Left ventricle myocardium inferior (tissue), 1 donor: ENCODE measurements at regions of chr1 and their contacts with region 1.

Region 1: DNA sequence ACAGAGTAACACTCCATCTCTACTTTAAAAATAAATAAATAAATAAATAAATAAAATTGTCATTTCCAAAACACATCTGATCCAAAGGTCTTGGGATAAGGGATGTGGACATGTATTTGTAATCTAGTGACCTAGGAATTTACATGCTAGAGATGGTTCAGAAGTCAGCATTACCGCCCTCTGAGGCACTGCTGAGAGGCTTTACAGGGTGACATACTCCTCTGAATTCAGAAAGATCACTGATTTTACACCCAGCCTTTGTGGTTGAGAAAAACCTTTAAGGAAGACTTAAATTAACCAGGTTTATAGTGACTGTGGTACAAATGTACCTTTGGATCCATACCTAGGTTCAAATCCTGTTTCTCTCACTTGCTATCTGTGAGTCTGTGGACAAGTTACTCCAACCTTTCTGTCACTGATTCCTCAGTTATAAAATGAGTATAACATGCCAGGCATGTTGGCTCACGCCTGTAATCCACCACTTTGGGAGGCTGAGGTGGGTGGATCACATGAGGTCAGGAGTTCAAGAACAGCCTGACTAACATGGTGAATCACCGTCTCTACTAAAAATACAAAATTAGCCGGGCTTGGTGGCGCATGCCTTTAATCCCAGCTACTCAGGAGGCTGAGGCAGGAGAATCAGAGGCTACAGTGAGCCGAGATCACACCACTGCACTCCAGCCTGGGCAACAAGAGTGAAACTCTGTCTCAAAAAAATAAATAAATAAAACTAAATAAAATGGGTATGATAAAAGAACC is 20.1 kb downstream of the OSBPL9 start:
- DNase-seq: no peak
- H3K4me3 ChIP-seq: no peak overlapping the region
- H3K27ac ChIP-seq: peak overlapping the region; percentile 41
- H3K4me1 ChIP-seq: peaks cover 56% of the 10 kb centered on the region
- H3K27me3 ChIP-seq: no peaks in the 10 kb centered on the region
- CTCF ChIP-seq: no peak

Region 2: GRCh38 chr1:51410568-51411460 is 226.1 kb before region 1 on chr1:
- intact Hi-C with region 1: no loop called
- DNase-seq: no peak
- H3K4me3 ChIP-seq: no peak overlapping the region
- H3K27ac ChIP-seq: peak overlapping the region; percentile 59
- H3K4me1 ChIP-seq: peaks cover 26% of the 10 kb centered on the region
- H3K27me3 ChIP-seq: no peaks in the 10 kb centered on the region
- CTCF ChIP-seq: no peak

Region 3: DNA sequence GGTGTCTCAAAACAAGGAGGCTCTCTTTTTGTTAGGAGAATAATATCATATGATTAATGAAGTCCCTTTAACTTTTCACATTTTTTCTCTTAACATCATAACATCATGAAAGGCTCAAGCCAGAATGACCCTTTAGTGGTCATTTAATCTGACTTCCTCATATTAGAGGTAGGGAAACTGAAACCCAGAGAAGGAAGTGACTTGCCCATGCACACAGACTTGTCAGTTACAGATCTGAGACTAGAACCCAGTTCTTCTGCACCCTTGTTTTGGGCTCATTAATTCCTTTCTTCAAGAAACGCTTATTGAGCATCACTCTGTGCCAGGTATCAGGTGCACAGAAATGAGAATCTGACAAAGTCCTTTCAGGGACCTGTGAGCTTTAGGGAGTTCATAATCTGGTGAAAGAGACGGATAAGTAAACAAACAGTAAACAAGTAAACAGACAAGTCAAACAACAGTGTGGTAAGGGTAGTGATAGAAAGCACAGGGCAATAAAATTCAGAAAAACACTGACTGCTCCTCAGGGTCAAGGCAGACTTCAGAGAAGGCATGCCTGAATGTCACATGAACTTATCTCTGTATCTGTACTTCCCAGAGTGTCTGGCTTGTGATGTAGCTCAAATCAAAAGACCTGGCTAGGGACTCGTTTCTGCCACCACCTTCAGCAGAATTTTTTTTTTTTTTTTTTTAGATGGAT is 58.4 kb before region 1 on chr1:
- intact Hi-C with region 1: no loop called
- DNase-seq: no peak
- H3K4me3 ChIP-seq: no peak overlapping the region
- H3K27ac ChIP-seq: no peak overlapping the region
- H3K4me1 ChIP-seq: peaks cover 15% of the 10 kb centered on the region
- H3K27me3 ChIP-seq: no peaks in the 10 kb centered on the region
- CTCF ChIP-seq: no peak

Region 4: GRCh38 chr1:51768971-51769588 is 132.1 kb after region 1 on chr1:
- intact Hi-C with region 1: loop called (anchors 10 kb)
- DNase-seq: no peak
- H3K4me3 ChIP-seq: no peak overlapping the region
- H3K27ac ChIP-seq: peak overlapping the region; percentile 27
- H3K4me1 ChIP-seq: peaks cover 4% of the 10 kb centered on the region
- H3K27me3 ChIP-seq: no peaks in the 10 kb centered on the region
- CTCF ChIP-seq: peak; percentile 89